ENCODE measurements at regions of chr11 and their contacts with region 1.

Region 1: GRCh38 chr11:46121724-46122477 is 647 bp upstream of the PHF21A start:
- DNase-seq: peak in 7 of 9 donors; percentile 20 to 85 (median 80)
- ATAC-seq: peak; percentile 69
- H3K4me3 ChIP-seq: peak overlapping the region; percentile 53
- H3K4me3 Mint-ChIP-seq: peak overlapping the region; percentile 83 to 95 (median 93)
- H3K27ac ChIP-seq: peak overlapping the region; percentile 80
- H3K27ac Mint-ChIP-seq: peak overlapping the region; percentile 87 to 98 (median 95)
- H3K4me1 ChIP-seq: peaks cover 18 to 22% of the 10 kb centered on the region in 2 donors
- H3K4me1 Mint-ChIP-seq: peaks cover 24 to 39% (median 35%) of the 10 kb centered on the region in 7 donors
- H3K27me3 ChIP-seq: no peaks in the 10 kb centered on the region
- H3K27me3 Mint-ChIP-seq: no peaks in the 10 kb centered on the region

Region 2: DNA sequence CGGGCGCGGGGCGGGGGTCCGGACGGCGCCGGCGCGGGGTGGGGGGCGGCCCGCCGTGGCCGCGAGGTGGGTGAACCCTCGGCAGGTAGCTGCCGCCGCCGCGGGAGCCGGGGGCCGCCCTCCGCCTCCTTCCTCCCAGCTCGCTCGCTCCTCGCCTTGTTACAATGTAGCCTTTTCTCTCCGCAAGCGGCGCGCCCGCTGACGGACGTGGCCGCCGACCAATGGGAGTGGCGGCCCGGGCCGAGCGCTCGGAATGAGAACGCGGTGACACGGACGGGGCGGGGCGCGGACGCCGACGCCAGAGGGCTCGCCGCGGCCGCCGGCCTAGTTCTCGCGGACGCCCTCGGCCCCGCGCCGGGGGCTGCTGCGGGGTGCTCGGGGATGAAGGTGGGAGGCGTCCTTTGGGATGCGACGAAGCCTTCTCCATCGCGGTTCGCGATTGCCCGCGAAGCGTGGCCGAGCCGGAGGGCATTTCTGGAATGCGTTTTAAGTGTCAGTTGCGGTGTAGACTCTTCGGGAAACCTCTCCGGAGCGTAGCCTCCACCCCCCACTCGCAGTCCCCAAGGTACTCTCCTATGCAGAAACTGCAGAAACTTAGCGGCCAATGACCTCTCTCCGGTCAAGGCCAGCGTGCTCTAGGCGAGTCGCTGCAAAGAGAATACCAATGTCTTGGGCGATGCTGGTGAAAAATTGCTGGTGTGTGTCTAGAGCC is 974.7 kb before region 1 on chr11:
- CTCF ChIA-PET with region 1: no interaction called
- POLR2A ChIA-PET with region 1: no interaction called
- intact Hi-C with region 1: loop called in 1 of 2 experiments (anchors 10 kb)
- DNase-seq: peak; percentile 86 to 93 (median 91)
- ATAC-seq: peak; percentile 98
- H3K4me3 ChIP-seq: peak overlapping the region; percentile 68
- H3K4me3 Mint-ChIP-seq: peak overlapping the region; percentile 85 to 95 (median 92)
- H3K27ac ChIP-seq: peak overlapping the region; percentile 79
- H3K27ac Mint-ChIP-seq: peak overlapping the region; percentile 47 to 95 (median 87)
- H3K4me1 ChIP-seq: peaks cover 13 to 14% of the 10 kb centered on the region in 2 donors
- H3K4me1 Mint-ChIP-seq: peaks cover 13 to 47% (median 43%) of the 10 kb centered on the region in 7 donors
- H3K27me3 ChIP-seq: no peaks in the 10 kb centered on the region
- H3K27me3 Mint-ChIP-seq: peaks cover 4 to 45% (median 10%) of the 10 kb centered on the region in 5 donors

Region 3: GRCh38 chr11:45846974-45847910 is 274.7 kb before region 1 on chr11 and contains the start of gene CRY2:
- CTCF ChIA-PET with region 1: no interaction called
- POLR2A ChIA-PET with region 1: interaction called, 5 read pairs
- intact Hi-C with region 1: loop called (anchors 2 kb)
- DNase-seq: peak; percentile 94 to 98 (median 97)
- ATAC-seq: peak; percentile 90
- H3K4me3 ChIP-seq: peak within 1 kb of the TSS; percentile 85
- H3K4me3 Mint-ChIP-seq: peak within 1 kb of the TSS; percentile 78 to 96 (median 90)
- H3K27ac ChIP-seq: peak within 1 kb of the TSS; percentile 91
- H3K27ac Mint-ChIP-seq: peak within 1 kb of the TSS; percentile 89 to 99 (median 96)
- H3K4me1 ChIP-seq: peaks cover 21 to 34% of the 10 kb centered on the region in 2 donors
- H3K4me1 Mint-ChIP-seq: peaks cover 40 to 68% (median 54%) of the 10 kb centered on the region in 7 donors
- H3K27me3 ChIP-seq: no peaks in the 10 kb centered on the region
- H3K27me3 Mint-ChIP-seq: peaks cover 0 to 20% (median 0%) of the 10 kb centered on the region in 5 donors
- total RNA-seq, gene CRY2: 31.1 to 202 (median 66.9) TPM

Region 4: DNA sequence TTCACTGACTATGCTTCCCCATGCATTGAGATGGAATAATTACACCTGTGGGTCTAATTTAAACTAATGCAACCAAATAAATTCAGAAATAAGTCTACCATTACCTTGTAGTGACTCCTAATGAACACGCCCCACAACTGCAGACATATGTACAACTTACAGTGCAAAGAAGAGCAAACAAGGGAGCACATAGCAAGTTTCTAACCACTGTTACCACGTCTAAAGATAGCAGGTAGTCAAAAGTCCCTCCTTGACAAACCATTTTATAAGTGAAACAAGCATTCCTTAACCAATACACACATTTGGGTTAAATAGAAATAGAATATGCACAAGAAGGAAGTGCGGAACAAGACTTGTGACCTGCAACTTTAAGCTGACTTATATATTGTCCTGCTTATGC is 21.2 kb before region 1 on chr11:
- CTCF ChIA-PET with region 1: no interaction called
- POLR2A ChIA-PET with region 1: interaction called, 8 read pairs
- intact Hi-C with region 1: loop called (anchors 1 to 2 kb)
- DNase-seq: no peak
- ATAC-seq: peak; percentile 59
- H3K4me3 ChIP-seq: peak overlapping the region; percentile 19
- H3K4me3 Mint-ChIP-seq: peak overlapping the region in 9 of 10 donors; percentile 64 to 81 (median 78)
- H3K27ac ChIP-seq: peak overlapping the region; percentile 61
- H3K27ac Mint-ChIP-seq: peak overlapping the region; percentile 28 to 86 (median 66)
- H3K4me1 ChIP-seq: peaks cover 4 to 12% of the 10 kb centered on the region in 2 donors
- H3K4me1 Mint-ChIP-seq: peaks cover 45 to 85% (median 70%) of the 10 kb centered on the region in 7 donors
- H3K27me3 ChIP-seq: no peaks in the 10 kb centered on the region
- H3K27me3 Mint-ChIP-seq: no peaks in the 10 kb centered on the region

Region 5: DNA sequence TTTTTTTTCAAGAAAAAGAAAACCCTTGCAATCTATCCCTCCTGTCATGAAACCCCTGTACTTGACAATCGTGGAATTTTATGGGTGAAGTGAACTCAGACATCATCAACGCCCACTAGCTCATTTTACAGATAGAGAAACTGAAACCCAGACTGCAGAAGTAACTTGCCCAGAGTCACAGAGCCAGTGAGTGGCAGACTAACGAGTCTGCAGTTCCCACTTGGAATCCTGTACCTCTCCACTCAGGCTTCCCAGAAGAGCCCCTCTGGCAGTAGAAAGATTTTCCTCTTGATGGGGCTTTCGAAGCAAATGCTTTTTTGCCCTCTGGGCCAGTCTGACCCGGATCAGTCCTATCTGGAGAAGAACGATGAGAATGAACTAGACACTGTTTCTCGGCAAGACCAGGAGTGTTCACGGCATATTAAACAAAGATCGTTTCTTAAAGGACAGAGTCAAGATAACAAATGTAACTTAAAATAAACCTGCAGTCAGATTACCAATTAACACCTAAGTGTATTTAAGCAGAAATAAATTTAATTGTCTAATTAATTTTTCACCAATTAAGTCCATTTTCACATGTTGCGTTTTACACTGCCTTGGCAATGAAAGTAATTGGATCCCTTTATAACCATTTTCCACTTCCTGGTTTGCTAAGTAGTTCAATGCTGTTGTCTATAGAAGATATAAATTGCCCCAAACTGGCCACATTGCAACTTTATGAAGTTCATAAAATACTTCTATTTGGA is 94.3 kb after region 1 on chr11:
- CTCF ChIA-PET with region 1: no interaction called
- POLR2A ChIA-PET with region 1: no interaction called
- intact Hi-C with region 1: no loop called
- DNase-seq: no peak
- ATAC-seq: no peak
- H3K4me3 ChIP-seq: no peak overlapping the region
- H3K4me3 Mint-ChIP-seq: no peak overlapping the region
- H3K27ac ChIP-seq: no peak overlapping the region
- H3K27ac Mint-ChIP-seq: no peak overlapping the region
- H3K4me1 ChIP-seq: no peaks in the 10 kb centered on the region
- H3K4me1 Mint-ChIP-seq: peaks cover 0 to 5% (median 0%) of the 10 kb centered on the region in 7 donors
- H3K27me3 ChIP-seq: no peaks in the 10 kb centered on the region
- H3K27me3 Mint-ChIP-seq: peaks cover 0 to 22% (median 13%) of the 10 kb centered on the region in 5 donors

Region 6: DNA sequence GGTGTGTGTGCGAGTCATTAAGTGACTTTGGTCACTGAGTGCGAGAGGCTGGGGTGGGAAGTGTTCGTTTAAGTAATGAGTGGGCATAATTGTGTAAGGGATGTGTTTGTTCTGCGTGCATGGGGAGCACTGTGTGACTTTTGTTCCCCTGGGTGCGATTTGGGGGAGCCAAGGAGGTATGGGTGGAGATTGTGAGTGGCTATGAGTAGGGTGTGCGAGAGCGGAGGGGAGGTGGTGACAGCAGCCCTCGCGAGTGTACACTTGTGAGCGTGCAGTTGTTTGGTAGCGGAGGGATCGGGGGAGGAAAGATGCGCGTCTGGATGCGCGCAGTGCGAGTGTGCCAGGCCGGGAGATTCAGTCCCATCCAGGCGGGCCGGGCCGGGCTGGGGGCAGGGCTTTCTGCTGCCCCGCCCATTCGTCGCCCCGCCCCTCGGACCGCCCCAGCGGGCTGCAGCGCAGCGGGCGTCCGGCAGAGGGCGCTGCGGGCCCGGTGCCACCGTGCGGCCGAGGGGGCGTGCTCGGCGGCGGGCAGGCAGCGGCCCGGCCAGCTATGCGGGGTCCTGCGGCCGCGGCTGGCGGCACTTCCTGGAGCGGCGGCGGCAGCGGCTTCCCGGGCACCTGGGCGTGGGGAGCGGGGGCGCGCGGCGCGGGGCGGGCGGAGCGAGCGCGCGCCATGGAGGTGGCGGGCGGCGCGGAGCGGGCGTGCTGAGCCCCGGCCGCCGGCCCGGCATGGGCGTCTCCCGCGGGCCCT is 225.2 kb after region 1 on chr11 and contains the start of gene DGKZ:
- CTCF ChIA-PET with region 1: no interaction called
- POLR2A ChIA-PET with region 1: interaction called, 4 read pairs
- intact Hi-C with region 1: loop called (anchors 1 to 5 kb)
- DNase-seq: peak; percentile 85 to 100 (median 96)
- ATAC-seq: peak; percentile 92
- H3K4me3 ChIP-seq: peak within 1 kb of the TSS; percentile 91
- H3K4me3 Mint-ChIP-seq: peak within 1 kb of the TSS; percentile 93 to 97 (median 95)
- H3K27ac ChIP-seq: peak within 1 kb of the TSS; percentile 83
- H3K27ac Mint-ChIP-seq: peak within 1 kb of the TSS; percentile 89 to 98 (median 94)
- H3K4me1 ChIP-seq: peaks cover 46 to 79% of the 10 kb centered on the region in 2 donors
- H3K4me1 Mint-ChIP-seq: peaks cover 61 to 85% (median 75%) of the 10 kb centered on the region in 7 donors
- H3K27me3 ChIP-seq: no peaks in the 10 kb centered on the region
- H3K27me3 Mint-ChIP-seq: peaks cover 0 to 3% (median 0%) of the 10 kb centered on the region in 5 donors
- total RNA-seq, gene DGKZ: 146 to 291 (median 263) TPM

Region 7: DNA sequence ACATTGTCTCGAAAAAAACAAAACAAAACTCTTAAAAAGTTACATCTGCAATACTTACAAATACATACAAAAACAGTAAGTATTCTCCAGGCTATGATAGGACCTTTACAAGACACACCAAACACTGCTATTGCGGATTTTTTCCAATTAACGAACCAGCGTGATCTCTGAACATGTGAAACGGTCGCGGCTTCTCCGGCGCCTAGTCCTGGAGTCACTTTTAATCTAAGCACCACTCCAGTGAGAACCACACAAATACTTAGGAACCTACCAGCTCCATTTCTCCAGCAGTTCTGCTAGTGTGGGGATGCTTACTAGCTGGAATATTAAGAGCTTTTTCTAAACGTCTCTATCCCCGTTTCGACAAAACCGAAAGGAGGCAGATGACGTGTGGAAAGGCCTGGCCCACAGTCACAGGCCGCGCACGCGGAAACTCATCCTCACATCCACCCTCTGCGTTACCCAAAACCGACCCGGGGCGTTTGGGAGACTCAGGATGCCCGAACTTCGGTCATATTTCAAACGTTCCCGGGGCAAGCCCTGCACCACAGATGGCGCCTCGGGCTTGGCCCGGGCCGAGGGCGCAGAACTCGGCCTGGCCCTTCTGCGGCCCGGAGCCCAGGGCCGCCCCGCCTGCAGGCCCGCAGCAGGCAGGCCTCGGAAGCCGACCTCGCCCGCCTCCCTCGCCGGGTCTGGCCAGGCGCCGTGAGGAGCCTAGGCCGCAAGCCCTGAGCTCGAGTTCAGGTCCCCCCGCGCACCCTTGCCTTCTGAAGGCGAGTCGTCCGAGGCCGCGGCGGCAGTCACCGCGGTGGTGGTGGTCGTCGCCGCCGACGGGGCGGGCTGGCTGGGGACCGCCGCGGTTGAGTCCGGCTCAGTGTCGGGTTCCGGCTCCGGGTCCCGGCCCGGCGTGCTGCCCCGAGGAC is 1644.7 kb after region 1 on chr11:
- CTCF ChIA-PET with region 1: no interaction called
- POLR2A ChIA-PET with region 1: no interaction called
- intact Hi-C with region 1: loop called in 1 of 2 experiments (anchors 5 kb)
- DNase-seq: peak; percentile 60 to 84 (median 79)
- ATAC-seq: peak; percentile 52
- H3K4me3 ChIP-seq: peak overlapping the region; percentile 94
- H3K4me3 Mint-ChIP-seq: peak overlapping the region; percentile 88 to 100 (median 96)
- H3K27ac ChIP-seq: peak overlapping the region; percentile 97
- H3K27ac Mint-ChIP-seq: peak overlapping the region; percentile 96 to 100 (median 99)
- H3K4me1 ChIP-seq: peaks cover 20 to 22% of the 10 kb centered on the region in 2 donors
- H3K4me1 Mint-ChIP-seq: peaks cover 16 to 39% (median 23%) of the 10 kb centered on the region in 7 donors
- H3K27me3 ChIP-seq: no peaks in the 10 kb centered on the region
- H3K27me3 Mint-ChIP-seq: no peaks in the 10 kb centered on the region

Measured in naive thymus-derived CD4-positive, alpha-beta T cell (primary cell).